AG04449 (cell line): ENCODE measurements at regions of chr11 and their contacts with region 1.

Region 1: DNA sequence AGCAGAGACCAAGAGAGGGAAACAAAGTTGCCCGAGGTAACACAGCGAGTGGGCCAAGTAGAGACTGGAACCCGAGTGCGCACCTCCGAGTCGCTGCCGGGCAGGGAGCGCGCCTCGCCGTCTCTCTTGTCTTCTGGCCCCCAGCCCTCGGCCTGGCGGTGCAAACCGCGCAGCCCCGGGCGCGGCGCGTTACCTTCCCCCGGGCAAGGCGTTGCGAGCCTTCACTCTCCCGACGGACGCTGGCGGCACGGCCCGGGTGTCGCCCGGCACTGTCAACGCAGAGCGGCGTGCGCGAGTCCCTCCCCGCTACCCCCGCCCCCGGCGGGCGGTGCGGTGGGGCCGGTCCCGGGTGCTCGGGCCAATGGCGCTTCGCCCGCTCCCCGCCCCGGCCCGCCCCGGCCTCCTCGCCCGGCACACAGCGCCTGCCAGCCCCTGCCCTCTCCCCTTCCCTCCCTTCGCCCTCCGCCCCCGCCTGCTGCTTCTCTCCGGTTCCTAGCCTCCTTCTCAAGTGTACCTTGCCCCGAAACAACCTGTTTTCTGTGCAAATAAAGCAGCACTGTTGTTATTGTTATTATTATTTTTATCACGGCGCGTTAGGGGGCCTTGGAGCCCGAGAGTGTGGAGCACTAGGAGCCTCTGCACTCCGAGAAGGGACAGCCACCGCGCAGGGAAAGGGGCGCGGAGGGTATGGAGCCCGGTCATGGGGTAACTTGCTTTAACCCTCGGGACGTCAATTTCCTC is at the start of gene SYTL2:
- DNase-seq: no peak
- H3K4me3 ChIP-seq: peak within 1 kb of the TSS; percentile 71
- CTCF ChIP-seq: no peak

Region 2: DNA sequence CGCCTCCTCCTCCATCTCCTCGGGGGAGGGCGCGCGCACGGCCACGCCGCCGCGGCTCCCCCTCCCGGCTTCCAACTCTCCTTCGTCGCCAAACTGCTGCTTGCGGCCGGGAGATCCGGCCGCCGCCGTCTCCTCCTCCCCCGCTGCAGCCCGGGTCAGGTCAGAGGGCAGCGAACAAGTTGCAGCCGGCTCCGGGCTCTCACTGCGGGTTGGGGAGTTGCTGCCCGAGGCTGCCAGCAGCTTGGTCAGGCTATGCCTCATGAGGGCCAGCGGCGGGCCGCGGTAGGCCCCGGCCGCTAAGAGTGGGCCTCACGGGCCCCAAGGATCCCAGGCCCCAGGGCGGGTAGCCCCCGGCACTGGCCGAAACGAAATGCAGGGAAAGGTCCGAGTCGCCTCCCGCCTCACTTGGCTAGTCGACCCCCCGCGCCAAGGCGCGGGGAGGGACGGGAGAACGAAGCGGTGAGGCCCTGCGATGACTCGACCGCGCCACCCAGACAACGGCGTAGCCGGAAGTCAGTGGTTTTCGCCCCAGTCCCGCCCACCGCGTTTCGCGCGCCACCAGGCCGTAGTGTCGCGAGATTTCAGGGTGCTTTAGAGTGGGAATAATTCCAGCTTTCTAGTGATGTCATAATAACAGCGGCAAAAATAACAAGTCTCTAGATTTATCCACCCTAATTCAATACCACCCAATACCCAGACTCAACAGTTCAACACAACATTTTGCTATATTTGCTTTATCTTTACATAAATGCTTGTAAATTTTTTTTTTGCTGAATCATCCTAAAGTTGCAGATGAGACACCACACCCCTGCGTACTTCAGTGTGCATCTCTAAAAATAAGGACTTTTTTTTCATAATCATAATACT is 146.2 kb before region 1 on chr11 and contains the start of gene CREBZF:
- CTCF ChIA-PET with region 1: interaction called, 10 read pairs
- POLR2A ChIA-PET with region 1: no interaction called
- DNase-seq: peak; percentile 71
- H3K4me3 ChIP-seq: peak within 1 kb of the TSS; percentile 83
- CTCF ChIP-seq: no peak

Region 3: GRCh38 chr11:85795712-85796487 is 15.1 kb before region 1 on chr11:
- CTCF ChIA-PET with region 1: interaction called, 15 read pairs
- POLR2A ChIA-PET with region 1: no interaction called
- DNase-seq: no peak
- H3K4me3 ChIP-seq: no peak overlapping the region
- CTCF ChIP-seq: no peak

Region 4: DNA sequence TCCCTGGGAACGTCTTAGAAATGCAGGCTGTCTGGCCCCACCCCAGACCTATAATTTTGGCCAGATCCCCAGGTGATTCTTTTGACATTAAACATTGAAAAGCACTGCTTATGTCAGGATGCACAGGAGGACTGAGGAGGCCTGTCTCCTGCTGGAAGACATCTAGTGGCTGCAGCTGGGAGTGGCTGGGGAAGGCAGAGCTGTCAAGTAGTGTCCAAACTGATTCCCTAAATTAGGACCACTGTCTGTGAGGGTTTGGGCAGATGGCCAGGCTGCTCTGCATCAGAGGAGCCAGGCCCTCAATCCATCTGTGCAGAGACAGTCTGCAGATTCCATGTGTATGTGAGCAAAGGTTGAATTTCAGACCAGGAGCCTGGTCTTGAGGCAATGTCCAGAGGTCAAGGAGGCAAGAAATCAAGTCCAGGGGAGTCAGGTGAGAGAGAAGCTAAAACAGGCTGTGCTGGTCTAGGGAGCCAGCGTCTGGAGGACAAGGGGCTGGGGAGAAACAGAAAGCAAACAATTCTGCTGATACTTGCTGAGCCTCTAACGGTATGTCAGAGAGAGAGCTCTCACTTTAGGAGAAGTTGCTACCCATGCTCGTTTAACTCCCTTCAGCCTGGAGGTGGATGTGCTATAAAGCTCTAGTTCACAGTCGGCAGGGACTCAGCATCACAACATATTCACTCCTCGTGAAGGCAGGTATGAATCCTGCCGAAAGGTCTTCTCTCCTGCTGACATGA is 15.2 kb after region 1 on chr11:
- CTCF ChIA-PET with region 1: interaction called, 26 read pairs
- POLR2A ChIA-PET with region 1: interaction called, 5 read pairs
- DNase-seq: no peak
- H3K4me3 ChIP-seq: no peak overlapping the region
- CTCF ChIP-seq: peak; percentile 80

Region 5: DNA sequence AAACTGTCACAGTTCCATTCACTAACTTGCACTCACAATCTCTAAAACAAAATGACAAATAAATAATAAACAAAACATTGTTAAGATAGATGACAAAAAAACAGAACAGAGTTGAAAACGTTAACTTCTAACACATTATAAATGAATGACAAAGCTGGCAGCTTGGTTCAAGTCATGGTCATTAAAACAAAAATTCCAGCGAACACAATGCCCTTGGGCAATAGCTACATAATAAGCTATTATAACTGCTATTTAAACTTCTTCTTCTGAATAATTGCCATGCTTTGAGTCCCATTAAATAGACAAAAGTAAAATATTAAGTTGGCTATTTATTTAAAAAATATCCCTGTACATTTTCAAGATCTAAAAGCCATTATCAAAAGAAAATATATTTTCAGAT is 203.2 kb after region 1 on chr11:
- CTCF ChIA-PET with region 1: no interaction called
- POLR2A ChIA-PET with region 1: no interaction called
- DNase-seq: no peak
- H3K4me3 ChIP-seq: no peak overlapping the region
- CTCF ChIP-seq: no peak